ENCODE measurements at regions of chr12 and their contacts with region 1.

Region 1: DNA sequence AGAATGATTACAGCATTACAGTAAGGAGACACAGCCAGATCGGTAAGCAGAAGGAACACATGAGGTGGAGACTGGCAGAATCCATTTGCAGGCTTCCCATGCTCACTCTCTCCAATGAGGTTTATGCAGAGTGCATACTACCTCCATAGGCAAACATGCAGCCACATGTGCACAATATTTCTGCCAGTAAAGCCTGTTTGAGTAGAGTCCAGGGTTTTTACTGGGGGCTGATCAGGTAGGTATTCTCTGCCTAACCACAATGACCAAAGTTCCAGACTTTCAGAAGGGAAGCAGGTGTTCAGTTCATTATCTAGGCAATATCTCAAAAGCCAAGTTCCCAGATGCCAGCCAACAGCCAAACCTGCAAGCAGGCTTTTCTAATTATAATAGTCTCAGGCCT is 31.1 kb downstream of the INTS13 start:
- DNase-seq: no peak
- ATAC-seq: no peak
- H3K4me3 ChIP-seq: no peak overlapping the region
- H3K27ac ChIP-seq: no peak overlapping the region
- H3K4me1 ChIP-seq: no peaks in the 10 kb centered on the region
- H3K27me3 ChIP-seq: no peaks in the 10 kb centered on the region
- CTCF ChIP-seq: no peak
- POLR2A ChIP-seq: no peak
- RAD21 ChIP-seq: no peak

Region 2: DNA sequence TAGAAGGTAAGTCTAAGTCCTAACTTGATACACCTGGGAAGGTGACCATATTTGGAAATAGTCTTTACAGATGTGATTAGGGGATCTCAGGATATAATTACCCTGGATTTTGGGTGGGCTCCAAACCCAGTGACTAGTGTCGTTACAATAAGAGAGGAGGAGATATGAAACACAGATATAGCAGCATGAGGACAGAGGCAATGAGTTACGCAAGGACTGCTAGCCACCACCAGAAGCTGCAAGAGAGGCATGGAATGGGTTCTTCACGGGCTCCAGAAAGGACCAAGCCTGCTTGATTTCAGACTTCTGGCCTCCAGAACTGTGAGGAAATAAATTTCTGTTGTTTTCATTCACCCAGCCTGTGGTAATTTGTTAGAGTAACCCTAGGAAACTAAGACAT is 60.1 kb after region 1 on chr12:
- CTCF ChIA-PET with region 1: no interaction called
- POLR2A ChIA-PET with region 1: no interaction called
- RAD21 ChIA-PET with region 1: no interaction called
- intact Hi-C with region 1: loop called (anchors 5 kb)
- DNase-seq: no peak
- ATAC-seq: no peak
- H3K4me3 ChIP-seq: no peak overlapping the region
- H3K27ac ChIP-seq: no peak overlapping the region
- H3K4me1 ChIP-seq: no peaks in the 10 kb centered on the region
- H3K27me3 ChIP-seq: no peaks in the 10 kb centered on the region
- CTCF ChIP-seq: no peak
- POLR2A ChIP-seq: no peak
- RAD21 ChIP-seq: no peak

Region 3: DNA sequence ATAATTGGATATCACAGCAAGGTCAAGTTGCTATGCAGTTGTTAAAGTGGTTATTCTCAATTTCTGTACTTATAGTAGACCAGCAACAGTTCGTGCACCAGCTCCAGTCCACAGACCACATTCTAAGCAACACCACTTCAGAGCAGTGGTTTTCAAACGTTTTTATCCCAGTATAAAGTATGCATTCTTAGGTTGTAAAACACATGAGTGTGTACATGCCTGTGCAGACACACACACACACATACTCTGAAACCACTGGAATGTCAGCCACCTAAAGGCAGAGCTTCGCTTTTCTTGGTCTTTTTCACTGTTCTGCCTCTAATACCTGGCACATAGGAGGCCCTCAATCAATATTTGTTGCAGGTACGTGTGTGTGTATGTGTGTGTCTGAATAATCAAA is 197.8 kb after region 1 on chr12:
- CTCF ChIA-PET with region 1: no interaction called
- POLR2A ChIA-PET with region 1: no interaction called
- RAD21 ChIA-PET with region 1: no interaction called
- intact Hi-C with region 1: no loop called
- DNase-seq: no peak
- ATAC-seq: no peak
- H3K4me3 ChIP-seq: no peak overlapping the region
- H3K27ac ChIP-seq: no peak overlapping the region
- H3K4me1 ChIP-seq: no peaks in the 10 kb centered on the region
- H3K27me3 ChIP-seq: no peaks in the 10 kb centered on the region
- CTCF ChIP-seq: no peak
- POLR2A ChIP-seq: no peak
- RAD21 ChIP-seq: no peak